Activated CD4-positive, alpha-beta memory T cell treated with anti-CD3 and anti-CD28 coated beads, Interleukin-2, amount 10 ng/mL, durations not matched to agents 7 days and 5 days (primary cell): ENCODE measurements at regions of chr12 and their contacts with region 1.

Region 1: GRCh38 chr12:107402041-107403022 is 283.3 kb upstream of the PWP1 start:
- DNase-seq: peak; percentile 68
- H3K4me3 Mint-ChIP-seq: no peak overlapping the region
- H3K27ac Mint-ChIP-seq: peak overlapping the region; percentile 44
- H3K4me1 Mint-ChIP-seq: peaks cover 19% of the 10 kb centered on the region
- H3K27me3 Mint-ChIP-seq: no peaks in the 10 kb centered on the region

Region 2: GRCh38 chr12:107131832-107132616 is 270.3 kb before region 1 on chr12:
- CTCF ChIA-PET with region 1: interaction called, 53 read pairs
- POLR2A ChIA-PET with region 1: interaction called, 3 read pairs
- DNase-seq: peak; percentile 17
- H3K4me3 Mint-ChIP-seq: no peak overlapping the region
- H3K27ac Mint-ChIP-seq: no peak overlapping the region
- H3K4me1 Mint-ChIP-seq: no peaks in the 10 kb centered on the region
- H3K27me3 Mint-ChIP-seq: no peaks in the 10 kb centered on the region

Region 3: GRCh38 chr12:107317751-107318613 is 84.3 kb before region 1 on chr12:
- CTCF ChIA-PET with region 1: interaction called, 40 read pairs
- POLR2A ChIA-PET with region 1: interaction called, 20 read pairs
- DNase-seq: peak; percentile 91
- H3K4me3 Mint-ChIP-seq: peak overlapping the region; percentile 76
- H3K27ac Mint-ChIP-seq: peak overlapping the region; percentile 10
- H3K4me1 Mint-ChIP-seq: peaks cover 29% of the 10 kb centered on the region
- H3K27me3 Mint-ChIP-seq: peaks cover 31% of the 10 kb centered on the region

Region 4: GRCh38 chr12:107328442-107329133 is 73.7 kb before region 1 on chr12:
- CTCF ChIA-PET with region 1: interaction called, 24 read pairs
- POLR2A ChIA-PET with region 1: no interaction called
- DNase-seq: peak; percentile 23
- H3K4me3 Mint-ChIP-seq: no peak overlapping the region
- H3K27ac Mint-ChIP-seq: no peak overlapping the region
- H3K4me1 Mint-ChIP-seq: peaks cover 56% of the 10 kb centered on the region
- H3K27me3 Mint-ChIP-seq: no peaks in the 10 kb centered on the region

Region 5: GRCh38 chr12:107372229-107372658 is 30.1 kb before region 1 on chr12:
- CTCF ChIA-PET with region 1: interaction called, 12 read pairs
- POLR2A ChIA-PET with region 1: interaction called, 5 read pairs
- DNase-seq: peak; percentile 45
- H3K4me3 Mint-ChIP-seq: peak overlapping the region; percentile 31
- H3K27ac Mint-ChIP-seq: peak overlapping the region; percentile 76
- H3K4me1 Mint-ChIP-seq: peaks cover 75% of the 10 kb centered on the region
- H3K27me3 Mint-ChIP-seq: no peaks in the 10 kb centered on the region

Region 6: DNA sequence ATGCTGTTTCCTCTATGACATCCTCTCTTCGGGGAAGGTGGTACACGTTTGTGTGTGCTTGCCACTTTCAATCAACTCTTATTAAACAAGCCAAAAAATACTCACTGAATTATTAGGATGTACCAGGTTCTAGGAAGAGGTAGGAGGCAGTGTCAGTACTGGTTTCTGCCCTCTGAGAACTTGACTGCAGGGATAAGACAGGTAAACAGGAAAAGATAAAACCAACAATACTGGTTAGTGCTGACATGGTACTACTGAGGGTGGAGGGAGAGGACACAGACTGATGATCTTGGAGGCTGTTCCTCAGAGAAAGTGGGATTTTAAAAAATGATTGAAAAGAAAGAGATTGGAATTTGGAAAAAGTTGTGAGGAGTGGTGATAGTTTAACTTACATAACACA is 11.9 kb before region 1 on chr12:
- CTCF ChIA-PET with region 1: interaction called, 12 read pairs
- POLR2A ChIA-PET with region 1: no interaction called
- DNase-seq: no peak
- H3K4me3 Mint-ChIP-seq: no peak overlapping the region
- H3K27ac Mint-ChIP-seq: peak overlapping the region; percentile 63
- H3K4me1 Mint-ChIP-seq: peaks cover 41% of the 10 kb centered on the region
- H3K27me3 Mint-ChIP-seq: no peaks in the 10 kb centered on the region

Region 7: GRCh38 chr12:107545737-107546353 is 143.5 kb after region 1 on chr12:
- CTCF ChIA-PET with region 1: no interaction called
- POLR2A ChIA-PET with region 1: no interaction called
- DNase-seq: no peak
- H3K4me3 Mint-ChIP-seq: no peak overlapping the region
- H3K27ac Mint-ChIP-seq: no peak overlapping the region
- H3K4me1 Mint-ChIP-seq: peaks cover 3% of the 10 kb centered on the region
- H3K27me3 Mint-ChIP-seq: no peaks in the 10 kb centered on the region

Region 8: GRCh38 chr12:107607464-107608392 is 205.4 kb after region 1 on chr12:
- CTCF ChIA-PET with region 1: interaction called, 34 read pairs
- POLR2A ChIA-PET with region 1: no interaction called
- DNase-seq: peak; percentile 79
- H3K4me3 Mint-ChIP-seq: no peak overlapping the region
- H3K27ac Mint-ChIP-seq: no peak overlapping the region
- H3K4me1 Mint-ChIP-seq: no peaks in the 10 kb centered on the region
- H3K27me3 Mint-ChIP-seq: no peaks in the 10 kb centered on the region

Region 9: GRCh38 chr12:107685360-107686248 is 283.3 kb after region 1 on chr12 and contains the start of gene PWP1:
- CTCF ChIA-PET with region 1: no interaction called
- POLR2A ChIA-PET with region 1: no interaction called
- DNase-seq: peak; percentile 96
- H3K4me3 Mint-ChIP-seq: peak within 1 kb of the TSS; percentile 87
- H3K27ac Mint-ChIP-seq: peak within 1 kb of the TSS; percentile 95
- H3K4me1 Mint-ChIP-seq: peaks cover 29% of the 10 kb centered on the region
- H3K27me3 Mint-ChIP-seq: no peaks in the 10 kb centered on the region
- total RNA-seq, gene PWP1: 31.9 to 34.5 TPM